Endothelial cell of umbilical vein (primary cell): ENCODE measurements at regions of chr17 and their contacts with region 1.

Region 1: DNA sequence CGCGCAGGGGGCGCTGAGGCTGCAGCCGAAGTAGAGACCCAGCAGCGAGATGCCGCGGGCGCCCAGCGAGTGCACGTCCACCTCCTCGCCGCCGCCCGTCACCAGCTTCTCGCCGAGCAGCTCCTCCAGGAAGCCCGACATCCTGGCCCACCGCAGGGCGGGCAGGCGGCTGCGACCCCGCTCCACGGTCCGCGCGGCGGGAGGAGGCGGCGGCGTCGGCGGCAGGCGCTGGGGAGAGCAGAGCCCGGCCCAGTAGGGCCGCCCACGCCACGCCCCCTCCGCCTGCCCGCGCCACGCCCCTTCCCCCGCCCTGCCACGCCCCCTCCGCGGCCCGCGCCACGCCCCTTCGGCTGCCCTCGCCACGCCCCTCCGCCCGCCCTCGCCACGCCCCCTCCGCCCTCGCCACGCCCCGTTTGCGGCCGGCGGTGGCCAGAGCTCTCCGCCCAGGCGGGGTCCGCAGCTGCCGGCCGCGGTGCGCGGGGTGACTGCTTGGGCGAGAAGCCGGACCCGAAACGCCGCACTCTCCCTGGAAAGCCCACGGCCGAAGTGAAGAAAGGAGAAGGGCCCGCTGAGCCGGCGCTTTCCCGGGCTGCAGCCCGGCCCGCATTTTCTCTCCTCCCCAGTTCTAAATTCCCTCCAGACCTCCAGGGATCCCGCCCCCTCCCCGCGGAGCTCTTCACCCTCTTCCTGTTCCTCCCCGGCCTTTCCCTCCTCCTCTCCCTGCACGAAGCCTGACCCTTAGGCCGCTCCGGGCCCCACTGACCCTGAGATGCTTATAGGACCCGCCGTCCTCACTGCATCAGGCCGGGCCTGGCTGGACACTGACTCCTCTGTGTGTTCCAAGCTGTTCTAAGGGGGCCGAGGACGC is at the start of gene NXN:
- DNase-seq: peak; percentile 80
- H3K4me3 ChIP-seq: peak within 1 kb of the TSS; percentile 84 to 93 (median 91)
- H3K27ac ChIP-seq: no peak within 1 kb of the TSS
- H3K4me1 ChIP-seq: peaks cover 21% of the 10 kb centered on the region
- H3K27me3 ChIP-seq: no peaks in the 10 kb centered on the region
- CTCF ChIP-seq: peak in 1 of 2 donors; percentile 45
- POLR2A ChIP-seq: peak; percentile 82
- total RNA-seq, gene NXN: 58.9 and 77.3 TPM in 2 replicates

Region 2: DNA sequence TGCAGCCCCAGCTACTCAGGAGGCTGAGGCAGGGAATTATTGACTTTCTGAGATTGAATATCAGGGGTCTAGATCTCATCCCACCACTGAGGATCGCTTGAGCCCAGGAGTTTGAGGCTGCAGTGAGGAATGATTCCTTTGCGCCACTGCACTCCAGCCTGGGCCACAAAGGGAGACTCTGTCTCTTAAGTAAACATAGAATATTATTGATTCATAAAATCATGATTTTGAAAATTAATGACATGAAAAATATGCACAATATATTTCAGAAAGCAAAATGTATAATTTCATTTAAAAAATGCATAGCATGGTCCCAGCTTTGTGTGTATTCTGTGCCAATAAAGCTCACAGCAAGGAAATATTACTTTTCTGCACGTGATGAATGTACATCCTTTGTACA is 263.5 kb before region 1 on chr17:
- CTCF ChIA-PET with region 1: interaction called, 11 read pairs
- POLR2A ChIA-PET with region 1: no interaction called
- dilution Hi-C with region 1: no loop called
- intact Hi-C with region 1: loop called (anchors 5 kb)
- DNase-seq: no peak
- H3K4me3 ChIP-seq: no peak overlapping the region
- H3K27ac ChIP-seq: no peak overlapping the region
- H3K4me1 ChIP-seq: peaks cover 19% of the 10 kb centered on the region
- H3K27me3 ChIP-seq: no peaks in the 10 kb centered on the region
- CTCF ChIP-seq: no peak
- POLR2A ChIP-seq: no peak

Region 3: GRCh38 chr17:781805-782731 is 197.7 kb before region 1 on chr17 and contains the starts of genes GLOD4 and MRM3:
- CTCF ChIA-PET with region 1: interaction called, 58 read pairs
- POLR2A ChIA-PET with region 1: no interaction called
- dilution Hi-C with region 1: loop called (anchors 25 kb)
- intact Hi-C with region 1: no loop called
- DNase-seq: peak; percentile 92
- H3K4me3 ChIP-seq: peak within 1 kb of the TSS; percentile 66 to 91 (median 83)
- H3K27ac ChIP-seq: peak within 1 kb of the TSS; percentile 29
- H3K4me1 ChIP-seq: peaks cover 18% of the 10 kb centered on the region
- H3K27me3 ChIP-seq: no peaks in the 10 kb centered on the region
- CTCF ChIP-seq: no peak
- POLR2A ChIP-seq: peak; percentile 92
- total RNA-seq, gene GLOD4: 81.8 and 84.2 TPM in 2 replicates
- total RNA-seq, gene MRM3: 19.0 and 19.2 TPM in 2 replicates

Region 4: DNA sequence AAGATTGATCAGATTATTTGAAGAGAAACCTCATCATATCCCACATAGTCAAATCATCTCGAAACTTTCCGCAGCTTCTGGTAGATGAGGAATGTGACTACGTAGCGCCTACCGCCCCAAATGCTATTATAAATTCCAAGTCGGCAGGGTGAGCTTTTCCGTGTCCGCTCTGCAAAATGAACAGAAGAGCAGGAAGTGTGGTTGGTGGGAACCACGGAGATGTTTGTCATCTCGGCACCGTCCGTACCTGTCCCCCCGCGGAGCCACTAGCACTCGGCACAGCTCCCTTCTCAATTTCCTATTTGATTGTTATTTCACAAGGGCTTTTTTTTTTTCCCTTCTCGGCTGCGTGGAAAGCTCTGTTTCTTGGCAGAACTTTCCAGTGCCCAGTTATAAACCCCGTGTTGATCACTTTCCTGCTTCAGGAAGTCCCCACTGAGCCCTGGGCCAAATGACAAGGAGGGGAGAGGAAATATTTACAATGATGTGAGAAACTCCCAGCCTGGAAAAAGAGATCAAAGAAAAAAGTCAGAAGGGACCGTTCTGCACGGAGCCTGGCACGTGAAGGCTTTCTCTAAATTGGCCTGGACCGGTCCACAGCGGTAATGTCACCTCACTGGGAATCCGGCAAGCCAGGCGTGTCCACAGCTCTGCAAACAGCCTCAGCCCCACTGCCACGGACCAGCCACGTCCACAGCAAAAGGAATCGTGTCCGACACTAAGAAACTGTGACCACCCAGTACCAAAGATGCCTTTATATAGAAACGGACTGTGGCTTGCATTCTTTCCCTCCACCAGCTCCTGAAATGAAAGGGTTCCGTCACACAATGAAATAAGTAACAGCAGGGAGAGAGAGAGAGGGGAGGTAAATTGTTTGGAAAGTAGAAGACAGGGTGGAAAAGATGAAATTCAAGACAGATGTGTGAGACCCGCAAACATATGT is 132.6 kb before region 1 on chr17:
- CTCF ChIA-PET with region 1: interaction called, 19 read pairs
- POLR2A ChIA-PET with region 1: no interaction called
- dilution Hi-C with region 1: no loop called
- intact Hi-C with region 1: no loop called
- DNase-seq: peak; percentile 79
- H3K4me3 ChIP-seq: peak overlapping the region; percentile 25 to 68 (median 36)
- H3K27ac ChIP-seq: peak overlapping the region; percentile 32
- H3K4me1 ChIP-seq: peaks cover 26% of the 10 kb centered on the region
- H3K27me3 ChIP-seq: peaks cover 0 to 3% of the 10 kb centered on the region in 2 experiments
- CTCF ChIP-seq: no peak
- POLR2A ChIP-seq: no peak

Region 5: GRCh38 chr17:915538-916201 is 64.1 kb before region 1 on chr17:
- CTCF ChIA-PET with region 1: interaction called, 8 read pairs
- POLR2A ChIA-PET with region 1: no interaction called
- dilution Hi-C with region 1: no loop called
- intact Hi-C with region 1: loop called (anchors 1 kb)
- DNase-seq: peak; percentile 94
- H3K4me3 ChIP-seq: peak overlapping the region in 1 of 3 experiments; percentile 0
- H3K27ac ChIP-seq: peak overlapping the region; percentile 79
- H3K4me1 ChIP-seq: peaks cover 31% of the 10 kb centered on the region
- H3K27me3 ChIP-seq: no peaks in the 10 kb centered on the region
- CTCF ChIP-seq: no peak
- POLR2A ChIP-seq: no peak

Region 6: GRCh38 chr17:996554-997344 is 17.0 kb after region 1 on chr17 and contains the start of gene TIMM22:
- CTCF ChIA-PET with region 1: interaction called, 32 read pairs
- POLR2A ChIA-PET with region 1: no interaction called
- dilution Hi-C with region 1: no loop called
- intact Hi-C with region 1: no loop called
- DNase-seq: peak; percentile 98
- H3K4me3 ChIP-seq: peak within 1 kb of the TSS; percentile 77 to 97 (median 86)
- H3K27ac ChIP-seq: peak within 1 kb of the TSS; percentile 86
- H3K4me1 ChIP-seq: peaks cover 29% of the 10 kb centered on the region
- H3K27me3 ChIP-seq: no peaks in the 10 kb centered on the region
- CTCF ChIP-seq: peak; percentile 94 to 97
- POLR2A ChIP-seq: peak; percentile 81
- total RNA-seq, gene TIMM22: 19.5 and 19.6 TPM in 2 replicates